PC-3 (cell line): ENCODE measurements at regions of chr5 and their contacts with region 1.

Region 1: GRCh38 chr5:102856389-102856777 is 101.3 kb downstream of the PAM start:
- DNase-seq: peak; percentile 88
- ATAC-seq: peak; percentile 63
- H3K4me3 ChIP-seq: peak overlapping the region; percentile 9; the same call in 1 of the 2 replicates
- H3K27ac ChIP-seq: peak overlapping the region; percentile 77
- H3K4me1 ChIP-seq: peaks cover 67% of the 10 kb centered on the region
- H3K27me3 ChIP-seq: no peaks in the 10 kb centered on the region
- CTCF ChIP-seq: no peak

Region 2: DNA sequence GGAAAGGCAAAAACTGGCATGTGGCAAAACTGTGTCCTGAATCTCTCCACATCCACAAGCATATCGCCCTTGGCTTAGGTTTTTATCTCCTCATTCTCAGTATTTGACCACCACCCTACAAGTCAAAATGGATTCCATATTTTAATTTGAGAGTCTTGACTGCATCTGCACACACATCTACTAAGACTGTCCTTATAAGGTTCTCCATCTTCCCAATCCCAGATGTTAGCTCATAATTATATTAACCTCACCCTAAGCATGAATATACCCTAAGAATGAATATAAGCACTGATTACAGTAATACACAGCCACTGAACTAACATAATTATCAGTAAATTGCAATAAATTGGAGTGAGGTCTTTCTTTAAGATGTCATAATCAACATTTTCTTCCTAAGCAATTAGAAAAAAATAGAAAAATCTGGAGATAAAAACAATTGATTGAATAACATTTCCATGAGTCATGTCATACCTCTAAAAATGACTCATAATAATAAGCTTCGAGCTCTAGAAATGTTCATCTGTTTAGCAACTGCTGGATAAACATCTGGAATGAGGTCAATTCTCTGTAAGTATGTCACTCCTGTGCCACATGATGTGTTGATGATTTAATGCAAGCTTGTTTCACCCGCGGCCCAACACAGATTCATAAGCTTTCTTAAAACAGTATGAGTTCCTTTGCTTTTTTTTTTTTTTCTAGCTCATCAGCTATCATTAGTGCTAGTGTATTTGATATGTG is 141.1 kb before region 1 on chr5:
- CTCF ChIA-PET with region 1: no interaction called
- POLR2A ChIA-PET with region 1: no interaction called
- intact Hi-C with region 1: loop called (anchors 1 kb)
- DNase-seq: peak; percentile 84
- ATAC-seq: peak; percentile 42
- H3K4me3 ChIP-seq: no peak overlapping the region
- H3K27ac ChIP-seq: no peak overlapping the region
- H3K4me1 ChIP-seq: peaks cover 39% of the 10 kb centered on the region
- H3K27me3 ChIP-seq: no peaks in the 10 kb centered on the region
- CTCF ChIP-seq: no peak

Region 3: GRCh38 chr5:102792705-102793104 is 63.7 kb before region 1 on chr5:
- CTCF ChIA-PET with region 1: interaction called, 5 read pairs
- POLR2A ChIA-PET with region 1: no interaction called
- intact Hi-C with region 1: loop called (anchors 1 kb)
- DNase-seq: peak; percentile 66
- ATAC-seq: 0 out of 2 replicates have a peak, but pooled peaks have one; percentile 24
- H3K4me3 ChIP-seq: no peak overlapping the region
- H3K27ac ChIP-seq: no peak overlapping the region
- H3K4me1 ChIP-seq: peaks cover 24% of the 10 kb centered on the region
- H3K27me3 ChIP-seq: no peaks in the 10 kb centered on the region
- CTCF ChIP-seq: peak; percentile 92

Region 4: DNA sequence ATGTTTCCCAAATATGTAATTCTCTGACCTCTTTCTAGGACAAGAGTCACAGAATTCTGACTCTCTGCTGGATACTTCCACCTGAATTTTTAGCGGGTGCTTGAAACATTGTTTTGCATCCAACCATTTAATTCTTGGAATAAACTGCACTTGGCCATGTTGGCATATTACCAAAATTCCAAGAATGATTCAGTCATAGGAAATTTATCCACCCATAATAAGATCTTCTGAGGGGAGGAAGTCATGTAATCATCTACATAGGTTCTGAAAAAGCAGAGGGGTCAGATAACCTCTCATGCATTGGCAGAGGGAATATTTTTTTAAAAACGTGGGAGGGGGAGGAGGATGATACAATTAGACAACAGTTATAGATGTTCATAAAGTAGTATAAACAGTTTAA is 55.6 kb after region 1 on chr5:
- CTCF ChIA-PET with region 1: interaction called, 3 read pairs
- POLR2A ChIA-PET with region 1: interaction called, 3 read pairs
- intact Hi-C with region 1: loop called (anchors 2 kb)
- DNase-seq: peak; percentile 92
- ATAC-seq: peak; percentile 51
- H3K4me3 ChIP-seq: no peak overlapping the region
- H3K27ac ChIP-seq: peak overlapping the region; percentile 82
- H3K4me1 ChIP-seq: peaks cover 37% of the 10 kb centered on the region
- H3K27me3 ChIP-seq: no peaks in the 10 kb centered on the region
- CTCF ChIP-seq: no peak

Region 5: GRCh38 chr5:102959055-102959454 is 102.7 kb after region 1 on chr5:
- CTCF ChIA-PET with region 1: no interaction called
- POLR2A ChIA-PET with region 1: no interaction called
- intact Hi-C with region 1: loop called (anchors 2 kb)
- DNase-seq: peak; percentile 96
- ATAC-seq: peak; percentile 98
- H3K4me3 ChIP-seq: peak overlapping the region; percentile 19; the same call in 1 of the 2 replicates
- H3K27ac ChIP-seq: peak overlapping the region; percentile 99
- H3K4me1 ChIP-seq: peaks cover 18% of the 10 kb centered on the region
- H3K27me3 ChIP-seq: no peaks in the 10 kb centered on the region
- CTCF ChIP-seq: no peak